Aorta (tissue), 5 donors: ENCODE measurements at regions of chr12 and their contacts with region 1.

Region 1: DNA sequence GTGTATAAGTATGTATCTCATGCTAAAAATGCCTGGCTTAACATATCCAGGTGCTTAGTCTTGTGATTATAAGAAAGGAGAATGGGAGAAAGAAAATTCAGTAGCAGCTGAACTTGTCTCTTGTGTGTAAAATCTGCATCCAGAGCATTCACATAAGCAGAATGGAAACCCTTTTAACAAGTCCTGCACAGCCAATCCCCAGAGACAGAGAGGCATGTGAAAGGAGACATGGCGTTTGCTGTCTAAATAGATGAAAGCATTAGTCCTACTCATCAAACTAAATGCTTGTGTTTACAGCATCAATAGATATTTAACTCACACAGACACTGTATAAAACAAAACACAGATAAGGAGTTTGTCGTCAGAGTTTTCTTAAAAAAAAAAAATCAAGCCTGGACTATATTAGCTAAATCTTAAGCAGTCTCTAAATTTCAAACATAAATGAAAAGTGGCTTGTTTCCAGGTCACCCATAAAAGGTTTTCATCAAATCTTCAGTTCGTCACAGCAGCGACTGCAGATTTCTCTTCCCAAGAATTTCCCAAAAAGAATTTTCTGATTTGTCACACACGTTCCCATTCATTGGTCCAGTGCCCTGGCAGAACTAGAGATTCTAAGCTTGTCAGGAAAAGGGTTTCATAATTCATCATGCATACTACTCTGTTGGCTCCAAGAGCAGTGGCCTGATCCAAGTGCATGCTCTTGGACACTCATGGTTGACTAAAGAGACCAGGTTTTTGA is 249.2 kb downstream of the BTG1 start:
- DNase-seq: peak in 1 of 2 donors; percentile 57
- ATAC-seq: peak; percentile 26
- H3K4me3 ChIP-seq: no peak overlapping the region
- H3K27ac ChIP-seq: no peak overlapping the region
- H3K4me1 ChIP-seq: peaks cover 0 to 3% of the 10 kb centered on the region in 2 donors
- H3K27me3 ChIP-seq: no peaks in the 10 kb centered on the region

Region 2: GRCh38 chr12:91542089-91542488 is 354.4 kb before region 1 on chr12:
- intact Hi-C with region 1: no loop called
- DNase-seq: no peak
- ATAC-seq: no peak
- H3K4me3 ChIP-seq: no peak overlapping the region
- H3K27ac ChIP-seq: no peak overlapping the region
- H3K4me1 ChIP-seq: no peaks in the 10 kb centered on the region
- H3K27me3 ChIP-seq: no peaks in the 10 kb centered on the region

Region 3: GRCh38 chr12:91958816-91959215 is 62.4 kb after region 1 on chr12:
- intact Hi-C with region 1: loop called in 1 of 2 experiments (anchors 5 kb)
- DNase-seq: no peak
- ATAC-seq: no peak
- H3K4me3 ChIP-seq: no peak overlapping the region
- H3K27ac ChIP-seq: no peak overlapping the region
- H3K4me1 ChIP-seq: no peaks in the 10 kb centered on the region
- H3K27me3 ChIP-seq: no peaks in the 10 kb centered on the region

Region 4: GRCh38 chr12:92108651-92109050 is 212.2 kb after region 1 on chr12:
- intact Hi-C with region 1: no loop called
- DNase-seq: no peak
- ATAC-seq: no peak
- H3K4me3 ChIP-seq: no peak overlapping the region
- H3K27ac ChIP-seq: no peak overlapping the region
- H3K4me1 ChIP-seq: no peaks in the 10 kb centered on the region
- H3K27me3 ChIP-seq: no peaks in the 10 kb centered on the region